ENCODE measurements at regions of chr3 and their contacts with region 1.

Region 1: DNA sequence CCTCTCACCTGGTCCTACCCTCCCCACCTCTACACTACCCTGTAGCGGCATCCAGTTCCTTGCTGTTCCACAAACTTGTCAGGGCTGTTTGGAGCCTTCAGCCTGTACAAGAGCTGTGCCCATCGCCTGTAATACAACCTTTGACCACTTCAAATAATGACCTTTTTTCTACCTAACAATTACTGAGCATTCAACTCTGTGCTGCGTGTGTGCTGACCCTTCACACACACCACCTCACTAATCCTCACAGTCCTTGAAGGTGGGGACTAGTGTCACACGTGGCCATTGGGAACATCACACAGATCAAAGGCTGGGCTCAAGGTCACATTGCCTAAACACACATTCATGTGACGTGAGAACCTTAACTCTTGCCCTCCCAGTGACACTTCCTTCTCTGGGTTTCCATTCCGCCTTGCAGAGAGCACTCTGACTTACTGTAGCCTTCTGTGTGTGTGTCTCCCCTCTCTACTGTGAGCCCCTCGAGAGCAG is 3.1 kb downstream of the C3orf20 start:
- DNase-seq: no peak
- ATAC-seq: no peak

Region 2: DNA sequence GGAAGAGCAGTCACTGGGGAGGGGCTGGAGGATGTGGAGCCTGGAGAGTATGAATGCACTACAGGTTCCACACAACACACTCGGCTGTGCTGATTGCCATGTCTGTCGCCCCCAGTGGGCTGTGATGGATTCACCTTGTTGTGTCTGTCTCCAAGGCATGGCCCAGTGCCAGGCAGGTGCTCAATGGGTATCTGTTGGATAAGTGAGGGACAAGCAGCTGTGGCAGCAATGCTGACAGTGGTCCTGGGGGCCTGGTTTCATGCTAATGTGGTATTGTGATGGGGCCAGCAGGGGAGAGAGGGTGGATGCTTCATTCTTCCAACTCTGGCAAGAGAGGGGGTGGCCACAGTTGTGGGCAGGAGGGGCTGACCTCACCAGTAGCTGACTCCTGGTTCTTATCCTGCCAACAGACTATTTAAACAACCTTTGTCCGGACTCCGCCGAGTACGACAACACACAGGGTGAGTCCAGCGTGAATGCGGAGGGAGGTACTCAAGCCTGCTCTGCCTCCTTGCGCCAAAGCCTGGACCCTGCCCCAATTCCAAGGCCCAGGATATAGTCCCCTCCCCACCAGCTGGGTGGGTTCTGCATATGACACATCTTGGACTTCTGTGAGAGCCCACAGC is 222.0 kb after region 1 on chr3:
- intact Hi-C with region 1: no loop called
- DNase-seq: no peak
- ATAC-seq: no peak

Region 3: GRCh38 chr3:14921078-14921616 is 243.1 kb after region 1 on chr3:
- intact Hi-C with region 1: loop called (anchors 10 kb)
- DNase-seq: peak; percentile 92
- ATAC-seq: peak; percentile 92